Sigmoid colon (tissue), 7 donors: ENCODE measurements at regions of chr20 and their contacts with region 1.

Region 1: GRCh38 chr20:24160563-24161375 is 172.2 kb upstream of the GGTLC1 start:
- DNase-seq: no peak
- H3K4me3 ChIP-seq: no peak overlapping the region
- H3K27ac ChIP-seq: no peak overlapping the region
- H3K4me1 ChIP-seq: peaks cover 0 to 12% (median 7%) of the 10 kb centered on the region in 4 donors
- H3K27me3 ChIP-seq: peaks cover 0 to 3% (median 0%) of the 10 kb centered on the region in 3 donors
- CTCF ChIP-seq: peak; percentile 29 to 73 (median 56)
- EP300 ChIP-seq: no peak
- POLR2A ChIP-seq: no peak

Region 2: DNA sequence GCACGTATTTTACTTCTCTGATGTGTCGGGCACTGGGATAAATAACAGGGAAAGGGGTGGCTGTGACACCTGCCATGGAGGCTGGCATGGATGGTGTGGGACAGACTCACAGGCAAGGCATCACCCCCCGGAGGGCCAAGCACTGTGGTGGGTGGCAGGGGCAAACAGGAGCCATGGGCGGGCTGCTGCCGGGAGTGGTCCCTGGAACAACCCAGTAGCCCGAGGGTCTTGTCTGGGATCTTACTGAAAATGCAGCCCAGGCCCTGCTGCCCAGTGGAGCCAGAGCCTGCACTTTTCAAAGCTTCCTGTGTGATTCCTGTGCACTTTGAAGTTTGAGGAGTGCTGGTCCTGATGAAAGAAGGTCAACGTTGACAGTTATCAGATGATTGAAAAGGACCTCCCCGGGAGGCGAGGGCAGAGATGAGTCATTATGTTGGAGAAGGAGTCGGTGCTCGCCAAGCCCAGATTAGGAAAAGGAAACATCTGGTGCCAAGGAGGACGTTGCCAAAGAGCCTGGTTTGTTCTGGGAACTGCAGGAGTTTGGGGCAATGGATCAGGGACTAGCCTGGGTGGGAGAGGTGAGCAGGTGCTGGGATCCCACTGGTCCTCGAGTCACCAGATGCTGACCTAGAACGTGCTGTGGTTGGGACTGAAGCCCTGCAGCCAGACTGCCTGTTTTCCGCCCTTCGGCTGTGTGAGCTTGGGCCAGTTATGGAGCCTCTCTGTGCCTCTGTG is 42.2 kb before region 1 on chr20:
- intact Hi-C with region 1: loop called (anchors 2 kb)
- DNase-seq: peak; percentile 66
- H3K4me3 ChIP-seq: no peak overlapping the region
- H3K27ac ChIP-seq: peak overlapping the region in 1 of 4 donors; percentile 44
- H3K4me1 ChIP-seq: peaks cover 0 to 23% (median 19%) of the 10 kb centered on the region in 4 donors
- H3K27me3 ChIP-seq: no peaks in the 10 kb centered on the region
- CTCF ChIP-seq: no peak
- EP300 ChIP-seq: no peak
- POLR2A ChIP-seq: no peak

Region 3: DNA sequence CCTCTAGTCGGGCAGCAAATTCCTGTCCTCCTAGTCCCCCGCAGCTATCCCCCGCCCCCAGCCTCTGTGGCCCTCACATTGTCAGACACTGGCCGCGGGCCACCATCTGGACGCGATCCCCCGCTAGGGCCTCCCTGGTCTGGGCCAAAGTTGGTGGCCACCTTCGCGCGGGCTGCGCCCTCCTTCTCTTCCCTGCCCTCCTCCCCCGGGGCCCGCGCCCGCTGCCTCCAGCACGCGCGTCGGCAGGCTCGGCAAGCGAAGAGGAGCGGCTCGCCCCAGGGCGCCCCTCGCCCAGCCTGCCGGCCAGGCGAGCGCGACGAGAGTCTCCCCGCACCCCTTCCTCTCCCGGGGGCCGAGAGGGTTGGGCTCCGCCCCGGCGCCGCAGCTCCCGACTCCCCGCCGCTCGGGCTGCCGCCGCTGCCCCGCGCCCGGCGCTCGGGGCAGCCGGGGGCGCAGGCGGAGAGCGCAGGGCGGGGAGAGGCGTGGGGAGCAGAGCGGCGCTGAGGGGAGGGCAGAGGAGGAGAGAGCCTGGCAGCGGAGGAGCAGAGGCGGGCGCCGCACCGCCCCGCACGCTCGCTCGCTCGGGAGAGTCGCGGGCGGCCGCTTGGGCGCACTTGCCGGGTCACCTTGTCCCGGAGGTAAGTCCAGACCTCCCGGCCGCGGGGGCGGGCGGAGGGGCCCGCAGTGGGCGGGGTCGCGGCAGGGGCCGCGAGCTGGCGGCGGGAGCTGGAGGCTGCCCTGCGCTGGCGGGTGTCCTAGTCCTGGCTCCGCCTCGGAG is 308.5 kb after region 1 on chr20 and contains the start of gene SYNDIG1:
- intact Hi-C with region 1: loop called (anchors 10 kb)
- DNase-seq: peak; percentile 48
- H3K4me3 ChIP-seq: peak within 1 kb of the TSS; percentile 22 to 56 (median 46)
- H3K27ac ChIP-seq: no peak within 1 kb of the TSS
- H3K4me1 ChIP-seq: peaks cover 0 to 40% (median 30%) of the 10 kb centered on the region in 4 donors
- H3K27me3 ChIP-seq: peaks cover 5 to 63% (median 44%) of the 10 kb centered on the region in 3 donors
- CTCF ChIP-seq: no peak
- EP300 ChIP-seq: no peak
- POLR2A ChIP-seq: no peak
- total RNA-seq, gene SYNDIG1: 0.16 to 0.36 (median 0.27) TPM in 3 of 4 donors, not detected in the other

Region 4: DNA sequence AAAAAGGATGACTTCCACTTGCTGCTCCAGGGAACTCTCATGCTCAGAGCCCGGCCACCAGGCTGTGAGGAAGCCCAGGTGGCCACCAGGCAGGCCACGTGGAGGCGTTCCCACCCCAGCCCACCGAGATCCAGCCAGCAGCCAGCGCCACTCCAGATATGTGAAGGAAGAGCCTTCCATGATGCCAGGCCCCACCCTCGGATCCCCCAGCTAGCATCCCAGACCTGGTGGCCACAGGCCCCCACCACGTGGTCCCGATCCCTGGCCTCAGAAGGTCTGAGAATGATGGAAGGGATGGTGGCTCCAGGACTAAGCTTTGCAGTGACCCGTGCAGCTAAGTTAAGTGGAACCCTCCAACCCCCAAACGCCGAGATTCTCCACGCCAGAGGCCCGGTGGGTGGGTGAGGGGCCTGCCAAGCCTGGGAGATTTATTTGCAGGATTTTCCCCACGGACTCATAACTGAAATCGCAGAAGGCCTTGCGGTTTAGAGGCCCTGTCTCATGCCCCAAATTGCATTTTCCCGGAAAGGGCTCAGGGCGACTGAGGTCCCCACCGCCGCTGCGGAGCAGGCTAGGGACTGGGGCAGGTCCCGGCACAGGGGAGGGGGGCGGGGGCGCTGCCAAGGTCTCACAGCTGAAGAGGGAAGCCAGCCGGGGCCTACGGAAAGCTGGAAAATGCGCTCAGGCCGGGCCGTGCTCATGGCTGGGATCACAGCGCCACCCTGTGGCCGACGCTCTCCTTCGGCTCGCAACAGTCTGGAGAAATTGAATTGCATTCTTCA is 757.2 kb after region 1 on chr20:
- intact Hi-C with region 1: loop called (anchors 5 kb)
- DNase-seq: no peak
- H3K4me3 ChIP-seq: no peak overlapping the region
- H3K27ac ChIP-seq: no peak overlapping the region
- H3K4me1 ChIP-seq: peaks cover 0 to 10% (median 3%) of the 10 kb centered on the region in 4 donors
- H3K27me3 ChIP-seq: no peaks in the 10 kb centered on the region
- CTCF ChIP-seq: peak; percentile 37 to 79 (median 62)
- EP300 ChIP-seq: no peak
- POLR2A ChIP-seq: no peak